Adrenal gland (tissue), 19 donors: ENCODE measurements at regions of chr19 and their contacts with region 1.

Region 1: GRCh38 chr19:4071610-4072009 is 4.9 kb upstream of the ZBTB7A start:
- DNase-seq: no peak
- H3K4me3 ChIP-seq: no peak overlapping the region
- H3K27ac ChIP-seq: no peak overlapping the region
- H3K4me1 ChIP-seq: peaks cover 0 to 9% of the 10 kb centered on the region in 2 donors
- H3K27me3 ChIP-seq: no peaks in the 10 kb centered on the region
- CTCF ChIP-seq: no peak
- POLR2A ChIP-seq: no peak

Region 2: GRCh38 chr19:4123615-4124568 is 52.3 kb after region 1 on chr19 and contains the start of gene MAP2K2:
- intact Hi-C with region 1: loop called in 1 of 2 experiments (anchors 5 kb)
- DNase-seq: peak; percentile 92 to 96 (median 95)
- H3K4me3 ChIP-seq: peak within 1 kb of the TSS; percentile 57 to 93 (median 70)
- H3K27ac ChIP-seq: peak within 1 kb of the TSS in 4 of 5 donors; percentile 10 to 96 (median 50)
- H3K4me1 ChIP-seq: peaks cover 13 to 24% of the 10 kb centered on the region in 2 donors
- H3K27me3 ChIP-seq: no peaks in the 10 kb centered on the region
- CTCF ChIP-seq: peak in 1 of 6 experiments; percentile 32
- POLR2A ChIP-seq: peak; percentile 57 to 68
- total RNA-seq, gene MAP2K2: 81.5 to 188 (median 140) TPM